HepG2 (cell line): ENCODE measurements at regions of chr16 and their contacts with region 1.

Region 1: DNA sequence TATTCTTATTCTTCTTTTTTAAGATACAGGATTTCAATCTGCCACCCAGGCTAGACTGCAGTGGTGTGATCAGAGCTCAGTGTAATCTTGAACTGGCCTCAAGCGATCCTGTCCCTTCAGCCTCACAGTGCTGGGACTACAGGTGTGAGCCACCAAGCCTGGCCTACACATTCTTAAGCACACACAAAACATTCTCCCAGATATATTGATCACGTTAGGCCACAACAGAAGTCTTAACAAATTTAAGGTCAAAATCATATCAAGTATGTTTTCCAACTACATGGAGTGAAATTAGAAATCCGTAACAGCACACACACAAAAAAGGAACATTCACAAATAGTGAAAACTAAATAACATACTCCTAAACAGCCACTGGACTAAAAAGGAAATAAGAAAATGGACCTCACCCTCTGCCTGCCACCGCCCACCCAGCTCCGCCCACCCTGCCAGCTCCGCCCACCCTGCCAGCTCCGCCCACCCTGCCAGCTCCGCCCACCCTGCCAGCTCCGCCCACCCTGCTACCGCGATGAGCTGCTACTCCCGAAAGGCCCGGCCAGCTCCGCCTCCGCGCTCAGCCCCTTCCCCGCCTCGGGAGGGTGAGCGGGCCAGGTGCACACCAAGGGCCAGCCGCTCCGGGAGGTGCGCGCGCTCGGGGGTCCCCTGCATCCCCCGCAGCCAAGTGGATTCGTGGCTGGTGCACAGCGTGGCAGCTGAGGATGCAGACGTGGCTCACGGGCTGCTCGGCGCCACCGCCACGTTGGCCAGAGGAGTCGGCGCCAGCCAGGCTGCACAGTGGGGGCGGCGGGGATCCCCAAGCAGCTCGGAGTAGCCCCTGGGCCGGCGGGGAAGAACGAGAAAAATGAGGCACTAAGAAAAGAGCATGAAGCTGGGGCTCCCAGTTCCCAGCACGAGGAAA is 41.2 kb downstream of the C16orf87 start:
- DNase-seq: peak; percentile 74
- ATAC-seq: peak; percentile 96
- H3K4me3 ChIP-seq: peak overlapping the region; percentile 74 to 93 (median 90)
- H3K27ac ChIP-seq: peak overlapping the region; percentile 71
- H3K4me1 ChIP-seq: peaks cover 37% of the 10 kb centered on the region
- H3K27me3 ChIP-seq: no peaks in the 10 kb centered on the region
- CTCF ChIP-seq: peak; percentile 30
- EP300 ChIP-seq: no peak
- POLR2A ChIP-seq: peak; percentile 90 to 96
- RAD21 ChIP-seq: peak; percentile 83

Region 2: GRCh38 chr16:46748775-46749705 is 40.7 kb before region 1 on chr16:
- CTCF ChIA-PET with region 1: no interaction called
- POLR2A ChIA-PET with region 1: interaction called, 10 read pairs
- in situ Hi-C with region 1: no loop called
- intact Hi-C with region 1: loop called (anchors 5 kb)
- DNase-seq: no peak
- ATAC-seq: peak; percentile 2; the same call in 2 of the 3 replicates
- H3K4me3 ChIP-seq: peak overlapping the region in 2 of 3 experiments; percentile 10 to 67; a peak in 2 of 6 replicates
- H3K27ac ChIP-seq: no peak overlapping the region
- H3K4me1 ChIP-seq: peaks cover 47% of the 10 kb centered on the region
- H3K27me3 ChIP-seq: no peaks in the 10 kb centered on the region; a peak in 2 of 5 replicates
- CTCF ChIP-seq: no peak
- EP300 ChIP-seq: no peak
- POLR2A ChIP-seq: no peak
- RAD21 ChIP-seq: no peak

Region 3: DNA sequence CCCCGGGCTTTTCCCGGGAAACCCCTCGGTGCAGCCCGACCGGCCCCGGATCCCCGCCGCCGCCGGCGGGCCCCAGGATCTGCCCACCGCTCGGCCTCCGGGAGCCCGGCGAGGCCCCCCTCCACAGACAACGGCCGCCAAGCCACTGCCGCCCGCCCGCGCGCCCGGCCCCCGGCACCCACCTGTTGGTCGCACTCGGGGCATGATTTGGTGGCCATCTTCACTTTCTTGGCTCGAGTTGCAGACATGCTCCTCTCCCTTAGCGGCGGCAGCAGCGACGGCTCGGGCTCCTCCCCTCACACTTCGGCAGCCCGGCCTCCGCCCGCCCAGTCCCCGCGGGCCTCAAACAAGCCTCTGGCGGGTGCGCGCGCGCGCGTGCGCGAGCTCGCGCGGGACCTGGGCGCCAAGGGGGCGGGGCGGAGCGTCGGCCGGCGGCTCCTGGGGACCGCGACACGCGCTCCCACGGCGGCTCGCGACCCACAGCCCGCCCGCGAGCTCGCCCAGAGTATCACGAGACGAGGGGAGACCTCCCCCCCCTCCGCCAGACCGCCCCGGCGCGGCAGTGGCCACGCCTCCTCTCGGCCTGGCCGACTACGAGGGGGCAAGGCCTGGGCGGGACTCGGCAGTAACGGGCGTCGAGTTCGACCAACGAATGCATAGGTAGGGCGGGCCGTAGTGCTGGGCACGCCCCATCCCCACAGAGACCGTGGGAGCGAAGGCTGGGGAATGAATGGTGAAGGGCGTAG is 41.3 kb after region 1 on chr16 and contains the start of gene C16orf87:
- CTCF ChIA-PET with region 1: no interaction called
- POLR2A ChIA-PET with region 1: interaction called, 15 read pairs
- in situ Hi-C with region 1: no loop called
- intact Hi-C with region 1: no loop called
- DNase-seq: peak; percentile 89
- ATAC-seq: peak; percentile 96
- H3K4me3 ChIP-seq: peak within 1 kb of the TSS; percentile 85 to 97 (median 87)
- H3K27ac ChIP-seq: peak within 1 kb of the TSS; percentile 85
- H3K4me1 ChIP-seq: peaks cover 55% of the 10 kb centered on the region
- H3K27me3 ChIP-seq: no peaks in the 10 kb centered on the region
- CTCF ChIP-seq: no peak
- EP300 ChIP-seq: 0 out of 4 replicates have a peak, but pooled peaks of 1 of the 2 experiments have one; percentile 17
- POLR2A ChIP-seq: peak; percentile 60 to 76
- RAD21 ChIP-seq: no peak
- total RNA-seq, gene C16orf87: 19.5 and 27.6 TPM in 2 replicates

Region 4: GRCh38 chr16:47247690-47248089 is 457.9 kb after region 1 on chr16:
- CTCF ChIA-PET with region 1: no interaction called
- POLR2A ChIA-PET with region 1: no interaction called
- in situ Hi-C with region 1: no loop called
- intact Hi-C with region 1: no loop called
- DNase-seq: no peak
- ATAC-seq: no peak
- H3K4me3 ChIP-seq: no peak overlapping the region
- H3K27ac ChIP-seq: no peak overlapping the region
- H3K4me1 ChIP-seq: no peaks in the 10 kb centered on the region
- H3K27me3 ChIP-seq: no peaks in the 10 kb centered on the region
- CTCF ChIP-seq: no peak
- EP300 ChIP-seq: no peak
- POLR2A ChIP-seq: no peak
- RAD21 ChIP-seq: no peak